Sigmoid colon (tissue), 7 donors: ENCODE measurements at regions of chr2 and their contacts with region 1.

Region 1: GRCh38 chr2:118186110-118186857 is 98.0 kb downstream of the INSIG2 start:
- DNase-seq: peak; percentile 96
- H3K4me3 ChIP-seq: peak overlapping the region; percentile 44 to 64 (median 58)
- H3K27ac ChIP-seq: peak overlapping the region; percentile 88 to 91 (median 90)
- H3K4me1 ChIP-seq: peaks cover 0 to 13% (median 5%) of the 10 kb centered on the region in 4 donors
- H3K27me3 ChIP-seq: no peaks in the 10 kb centered on the region
- CTCF ChIP-seq: no peak
- EP300 ChIP-seq: no peak
- POLR2A ChIP-seq: peak in 1 of 2 donors; percentile 35

Region 2: DNA sequence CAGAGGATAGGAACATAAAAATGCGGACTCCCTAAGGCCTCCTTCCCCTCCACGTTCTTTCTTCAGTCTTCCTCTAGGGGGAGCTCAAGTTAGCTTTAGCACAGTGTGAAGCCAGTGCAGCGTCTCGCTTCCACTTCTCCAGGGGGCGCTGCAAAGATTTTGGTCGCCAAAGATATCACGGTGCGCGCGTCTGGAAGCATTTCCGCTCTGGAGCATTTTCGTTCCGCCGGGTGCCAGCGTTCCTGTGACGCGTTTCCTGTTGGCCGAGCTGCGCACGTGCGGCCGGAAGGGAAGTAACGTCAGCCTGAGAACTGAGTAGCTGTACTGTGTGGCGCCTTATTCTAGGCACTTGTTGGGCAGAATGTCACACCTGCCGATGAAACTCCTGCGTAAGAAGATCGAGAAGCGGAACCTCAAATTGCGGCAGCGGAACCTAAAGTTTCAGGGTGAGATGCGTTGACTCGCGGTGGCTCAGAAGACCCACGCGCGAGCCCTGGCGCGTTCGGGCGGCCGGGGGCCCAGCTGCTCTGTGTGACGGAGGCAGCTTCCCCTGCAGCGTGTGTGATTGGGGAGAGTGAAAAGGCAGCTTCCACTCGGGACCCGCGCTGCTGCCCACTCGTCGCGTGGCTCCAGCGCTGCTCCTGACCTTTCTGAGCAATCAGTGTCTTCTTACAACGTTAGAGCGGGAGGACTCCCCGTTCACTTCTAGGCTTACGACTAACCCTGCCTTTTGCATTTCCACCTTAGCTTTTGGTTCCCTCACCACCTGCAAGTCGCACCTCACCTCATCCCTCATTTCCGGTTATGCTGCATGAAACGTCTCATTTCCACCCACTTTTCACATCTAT is 371.6 kb before region 1 on chr2 and contains the start of gene DDX18:
- intact Hi-C with region 1: loop called (anchors 2 kb)
- DNase-seq: peak; percentile 98
- H3K4me3 ChIP-seq: peak within 1 kb of the TSS; percentile 78 to 95 (median 83)
- H3K27ac ChIP-seq: peak within 1 kb of the TSS; percentile 87 to 90 (median 89)
- H3K4me1 ChIP-seq: peaks cover 0 to 19% (median 16%) of the 10 kb centered on the region in 4 donors
- H3K27me3 ChIP-seq: no peaks in the 10 kb centered on the region
- CTCF ChIP-seq: peak; percentile 97 to 99 (median 99)
- EP300 ChIP-seq: peak in 1 of 4 donors; percentile 57
- POLR2A ChIP-seq: peak; percentile 32 to 37
- total RNA-seq, gene DDX18: 33.0 to 41.0 (median 37.5) TPM

Region 3: DNA sequence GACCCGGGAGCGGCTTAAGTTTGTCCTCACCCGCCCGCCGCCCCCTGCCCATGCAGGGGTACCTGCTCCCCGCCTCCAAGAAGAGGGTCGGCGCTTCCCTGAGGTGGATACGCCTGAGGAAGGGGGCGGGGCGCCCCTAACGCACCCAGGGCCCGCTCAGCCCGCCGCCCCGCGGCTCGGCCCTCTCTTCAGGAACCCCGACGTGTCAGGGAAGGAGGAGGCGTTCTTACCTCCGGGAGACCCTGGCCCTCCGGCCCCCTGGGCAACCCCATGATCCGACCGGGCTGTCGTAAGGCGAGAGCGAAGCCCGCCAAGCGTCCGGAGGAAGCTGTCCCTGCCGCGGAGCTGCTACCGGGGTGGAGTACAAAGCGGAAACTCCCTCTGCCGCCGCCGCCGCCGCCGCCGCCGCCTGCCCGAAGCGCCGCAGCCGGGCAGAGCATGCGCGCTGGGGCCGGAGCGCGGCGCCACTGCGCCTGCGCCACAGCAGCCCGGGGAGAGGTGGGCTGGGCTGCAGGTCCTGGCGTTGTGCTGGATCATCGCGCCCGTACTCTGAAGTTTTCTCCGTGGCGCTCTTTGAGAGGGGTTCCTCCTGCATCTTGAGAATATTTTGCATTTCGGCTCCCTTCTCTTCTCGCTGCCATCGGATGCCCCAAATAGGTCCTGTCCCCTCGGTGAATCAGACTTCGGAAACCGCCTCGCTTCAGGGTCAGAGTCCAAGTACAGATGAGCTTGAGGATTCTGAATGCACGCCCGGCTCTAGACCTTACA is 172.4 kb before region 1 on chr2 and contains the start of gene CCDC93:
- intact Hi-C with region 1: loop called (anchors 10 kb)
- DNase-seq: peak; percentile 86
- H3K4me3 ChIP-seq: peak within 1 kb of the TSS; percentile 72 to 100 (median 95)
- H3K27ac ChIP-seq: peak within 1 kb of the TSS; percentile 87 to 92 (median 89)
- H3K4me1 ChIP-seq: peaks cover 0 to 28% (median 17%) of the 10 kb centered on the region in 4 donors
- H3K27me3 ChIP-seq: no peaks in the 10 kb centered on the region
- CTCF ChIP-seq: no peak
- EP300 ChIP-seq: no peak
- POLR2A ChIP-seq: peak; percentile 39 to 49
- total RNA-seq, gene CCDC93: 12.5 to 25.5 (median 15.3) TPM

Region 4: DNA sequence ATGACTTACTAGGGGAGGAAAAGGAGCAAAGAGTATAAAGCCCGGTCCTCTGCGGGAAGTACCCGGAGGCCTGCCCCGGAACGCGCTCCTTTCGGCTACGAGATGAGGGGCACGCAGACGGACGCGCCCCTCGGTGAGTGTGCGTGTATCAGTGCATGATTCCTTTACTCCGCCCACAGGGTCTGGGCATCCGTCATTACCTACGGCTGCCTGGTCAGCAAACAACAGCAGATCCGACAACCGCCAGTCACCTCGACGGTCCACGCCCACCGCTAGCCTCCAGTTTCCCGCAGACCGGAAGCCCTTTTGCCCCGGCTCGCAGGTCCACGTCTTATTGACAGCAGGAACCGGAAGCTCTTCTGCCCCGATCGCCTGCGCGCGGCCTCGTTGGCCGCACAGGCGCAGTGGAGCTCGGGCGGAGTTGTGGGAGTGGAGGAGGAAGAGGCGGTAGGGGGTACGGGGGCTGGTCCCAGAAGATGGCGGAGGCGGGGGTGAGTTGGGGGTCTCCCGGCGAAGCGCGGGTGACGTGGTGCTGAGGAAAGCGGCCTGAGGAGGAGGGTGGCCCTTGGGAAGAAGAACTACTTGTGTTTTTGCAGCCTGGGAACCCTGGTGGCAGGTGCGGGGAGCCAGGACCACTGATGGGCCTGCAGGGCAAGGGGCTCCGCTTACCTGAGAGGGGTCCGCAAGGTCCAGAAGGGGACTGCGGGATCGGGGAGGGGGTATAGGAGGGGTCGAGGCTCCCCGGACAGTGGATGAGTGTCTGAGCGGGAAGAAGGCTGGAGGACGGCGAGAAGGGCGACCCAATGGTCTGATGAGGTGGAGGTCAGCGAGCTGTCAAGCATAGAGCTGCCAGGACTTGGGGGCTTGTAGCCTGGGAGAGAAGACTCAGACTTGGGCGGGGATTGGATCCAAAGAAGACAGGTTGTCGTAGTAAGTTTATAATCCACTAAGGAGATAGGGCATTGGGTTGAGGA is 97.9 kb before region 1 on chr2 and contains the start of gene INSIG2:
- intact Hi-C with region 1: loop called (anchors 1 kb)
- DNase-seq: peak; percentile 94
- H3K4me3 ChIP-seq: peak within 1 kb of the TSS; percentile 59 to 90 (median 70)
- H3K27ac ChIP-seq: peak within 1 kb of the TSS; percentile 60 to 76 (median 65)
- H3K4me1 ChIP-seq: peaks cover 0 to 25% (median 18%) of the 10 kb centered on the region in 4 donors
- H3K27me3 ChIP-seq: no peaks in the 10 kb centered on the region
- CTCF ChIP-seq: peak in 1 of 4 experiments; percentile 13
- EP300 ChIP-seq: no peak
- POLR2A ChIP-seq: peak; percentile 37 to 68
- total RNA-seq, gene INSIG2: 15.2 to 20.7 (median 18.6) TPM

Region 5: GRCh38 chr2:118221666-118222594 is 35.6 kb after region 1 on chr2:
- intact Hi-C with region 1: loop called (anchors 5 kb)
- DNase-seq: no peak
- H3K4me3 ChIP-seq: no peak overlapping the region
- H3K27ac ChIP-seq: no peak overlapping the region
- H3K4me1 ChIP-seq: peaks cover 0 to 15% (median 14%) of the 10 kb centered on the region in 4 donors
- H3K27me3 ChIP-seq: peaks cover 41 to 89% (median 49%) of the 10 kb centered on the region in 3 donors
- CTCF ChIP-seq: peak in 3 of 4 experiments; percentile 51 to 56 (median 53)
- EP300 ChIP-seq: no peak
- POLR2A ChIP-seq: no peak

Region 6: DNA sequence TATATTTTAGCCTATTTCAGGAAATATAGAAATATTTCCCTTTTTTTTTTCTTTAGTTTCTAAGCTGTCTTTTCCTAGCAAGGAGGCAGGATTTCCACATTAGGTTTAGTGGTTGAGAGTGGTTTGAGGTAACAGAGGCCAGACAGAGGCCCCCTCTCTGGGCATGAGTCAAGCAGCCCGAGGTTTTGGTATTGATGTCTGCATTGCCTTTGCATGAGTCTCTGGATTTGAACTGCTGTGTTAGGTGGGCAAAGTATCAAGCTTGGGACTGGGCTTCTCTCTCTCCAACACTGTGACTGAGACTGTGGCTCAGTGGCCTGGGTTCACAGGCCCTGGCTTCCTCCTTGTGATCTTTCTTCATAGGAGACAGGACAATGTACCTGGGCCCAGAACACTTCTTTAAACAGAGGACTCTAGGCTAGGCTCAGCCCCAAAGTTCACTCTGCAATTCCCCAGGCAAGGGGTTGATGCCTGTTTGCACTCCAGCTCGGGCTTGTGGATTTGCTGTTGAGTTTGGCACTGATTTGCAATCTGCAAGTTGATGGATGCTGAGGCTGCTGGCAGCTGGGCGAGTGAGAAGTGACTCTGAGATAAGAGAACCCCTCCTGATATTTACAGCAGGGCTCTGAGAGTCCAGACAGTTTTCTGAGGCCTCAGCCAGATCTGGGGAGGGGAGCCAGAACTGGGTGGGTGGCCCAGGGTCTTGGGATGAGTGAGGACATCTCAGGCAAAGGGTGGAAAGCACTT is 390.0 kb after region 1 on chr2:
- intact Hi-C with region 1: no loop called
- DNase-seq: no peak
- H3K4me3 ChIP-seq: no peak overlapping the region
- H3K27ac ChIP-seq: no peak overlapping the region
- H3K4me1 ChIP-seq: no peaks in the 10 kb centered on the region
- H3K27me3 ChIP-seq: no peaks in the 10 kb centered on the region
- CTCF ChIP-seq: no peak
- EP300 ChIP-seq: no peak
- POLR2A ChIP-seq: no peak

Region 7: GRCh38 chr2:119366649-119367471 is 1180.6 kb after region 1 on chr2 and contains the starts of genes C2orf76 and DBI:
- intact Hi-C with region 1: loop called (anchors 10 kb)
- DNase-seq: peak; percentile 97
- H3K4me3 ChIP-seq: peak within 1 kb of the TSS; percentile 55 to 79 (median 62)
- H3K27ac ChIP-seq: peak within 1 kb of the TSS; percentile 83 to 88 (median 87)
- H3K4me1 ChIP-seq: peaks cover 0 to 30% (median 26%) of the 10 kb centered on the region in 4 donors
- H3K27me3 ChIP-seq: no peaks in the 10 kb centered on the region
- CTCF ChIP-seq: no peak
- EP300 ChIP-seq: peak in 1 of 4 donors; percentile 84
- POLR2A ChIP-seq: peak; percentile 56 to 84
- total RNA-seq, gene C2orf76: 11.1 to 18.2 (median 16.9) TPM
- total RNA-seq, gene DBI: 49.5 to 92.4 (median 70.7) TPM